H1 (cell line): ENCODE measurements at regions of chr19 and their contacts with region 1.

Region 1: DNA sequence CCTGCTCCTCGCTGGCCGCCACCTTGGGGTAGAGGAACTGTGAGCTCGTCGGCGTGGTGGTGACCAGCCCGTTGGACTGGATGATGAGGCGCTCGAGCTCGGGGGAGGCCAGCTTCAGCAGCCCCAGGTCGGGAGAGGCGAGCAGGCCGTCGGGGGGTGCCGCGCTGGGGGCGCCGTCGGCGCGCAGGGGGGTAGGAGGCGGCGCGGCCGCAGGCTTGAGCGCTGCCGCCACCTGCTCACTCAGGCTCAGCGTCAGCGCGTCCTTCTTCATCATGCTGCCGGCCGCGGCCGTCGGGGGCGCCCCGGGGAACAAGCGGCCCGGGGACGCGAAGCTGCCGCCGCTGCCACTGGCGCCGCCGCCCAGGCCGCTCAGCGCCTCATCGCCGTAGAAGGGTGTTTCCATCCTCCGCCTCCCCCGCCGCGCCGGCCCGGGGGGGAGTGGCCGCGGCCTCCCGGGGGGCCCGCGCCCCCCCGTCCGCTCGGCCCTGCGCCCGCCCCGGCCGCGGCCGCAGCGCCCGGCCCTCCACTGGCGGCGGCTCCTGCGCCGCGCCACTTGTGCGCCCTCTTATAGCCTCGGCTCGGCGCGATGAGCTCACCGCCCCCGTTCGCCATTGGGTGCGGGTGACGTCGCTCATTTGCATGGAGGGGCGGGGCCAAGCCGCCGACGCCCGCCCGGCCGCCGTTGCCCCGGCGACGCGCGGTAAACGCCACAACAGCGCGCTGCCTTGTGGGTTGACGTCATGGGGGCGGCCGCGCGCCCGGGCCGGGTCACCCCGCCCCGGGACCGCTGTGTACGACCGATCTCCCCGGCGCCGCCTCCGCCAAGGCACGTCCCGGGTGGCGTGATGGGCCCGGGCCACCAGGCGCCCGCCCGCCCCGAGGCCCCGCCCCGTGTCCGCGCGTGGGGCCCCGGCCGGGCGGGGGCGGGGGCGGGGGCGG is at the start of gene JUND:
- DNase-seq: peak; percentile 90 to 97
- H3K4me3 ChIP-seq: peak within 1 kb of the TSS; percentile 88 to 99 (median 92)
- H3K27ac ChIP-seq: peak within 1 kb of the TSS; percentile 95
- H3K4me1 ChIP-seq: peaks cover 4 to 14% (median 8%) of the 10 kb centered on the region in 4 experiments; a peak in 5 of 7 replicates
- H3K27me3 ChIP-seq: no peaks in the 10 kb centered on the region; a peak in 1 of 7 replicates
- CTCF ChIP-seq: no peak
- EP300 ChIP-seq: peak; percentile 80 to 96
- POLR2A ChIP-seq: peak in 1 of 2 experiments; percentile 99; a peak in 2 of 3 replicates
- RAD21 ChIP-seq: 0 out of 4 replicates have a peak, but pooled peaks of 1 of the 2 experiments have one; percentile 0
- total RNA-seq, gene JUND: 77.5 and 95.8 TPM in 2 replicates

Region 2: DNA sequence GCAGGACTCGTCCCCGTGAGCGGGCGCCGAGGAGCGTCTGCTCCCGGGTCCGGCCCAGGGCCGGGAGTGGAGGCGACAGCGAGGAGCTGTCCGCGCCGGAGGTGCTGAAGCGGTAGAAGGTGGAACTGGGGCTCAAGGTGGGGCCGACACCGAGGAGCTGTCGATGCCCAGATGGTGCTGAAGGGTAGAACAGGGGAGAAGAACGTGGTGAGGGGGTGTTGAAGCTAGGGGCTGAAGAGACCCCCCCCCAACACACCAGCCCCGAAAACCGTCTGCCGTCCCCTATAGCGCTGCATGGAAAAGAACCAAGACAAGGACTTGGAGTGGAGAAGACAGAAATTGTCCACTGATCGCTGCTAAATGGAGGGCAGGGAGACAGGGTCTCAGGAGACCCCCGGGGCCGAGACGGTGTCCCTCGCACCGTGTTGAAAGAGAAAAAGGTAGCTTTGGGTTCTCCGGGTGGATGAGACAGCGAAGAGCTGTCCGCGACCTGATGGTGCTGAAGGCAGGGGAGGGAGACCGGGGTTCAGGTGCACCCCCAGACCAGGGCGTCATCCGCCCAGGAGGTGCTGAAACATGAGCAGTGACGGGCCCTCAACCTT is 48.0 kb before region 1 on chr19:
- CTCF ChIA-PET with region 1: interaction called, 11 read pairs
- POLR2A ChIA-PET with region 1: interaction called, 43 read pairs
- DNase-seq: peak in 1 of 2 experiments; percentile 95
- H3K4me3 ChIP-seq: peak overlapping the region; percentile 11 to 54 (median 32); a peak in 7 of 8 replicates
- H3K27ac ChIP-seq: no peak overlapping the region
- H3K4me1 ChIP-seq: peaks cover 6 to 20% (median 14%) of the 10 kb centered on the region in 4 experiments
- H3K27me3 ChIP-seq: no peaks in the 10 kb centered on the region
- CTCF ChIP-seq: no peak
- EP300 ChIP-seq: peak in 1 of 2 experiments; percentile 18; a peak in 1 of 3 replicates
- POLR2A ChIP-seq: no peak
- RAD21 ChIP-seq: no peak

Region 3: GRCh38 chr19:18259893-18260292 is 21.5 kb before region 1 on chr19:
- CTCF ChIA-PET with region 1: interaction called, 172 read pairs
- POLR2A ChIA-PET with region 1: interaction called, 62 read pairs
- DNase-seq: no peak
- H3K4me3 ChIP-seq: no peak overlapping the region
- H3K27ac ChIP-seq: no peak overlapping the region
- H3K4me1 ChIP-seq: peaks cover under 1 to 7% (median 5%) of the 10 kb centered on the region in 4 experiments
- H3K27me3 ChIP-seq: peaks cover 0 to 10% (median 0%) of the 10 kb centered on the region in 4 experiments; a peak in 3 of 7 replicates
- CTCF ChIP-seq: no peak
- EP300 ChIP-seq: no peak
- POLR2A ChIP-seq: no peak
- RAD21 ChIP-seq: no peak

Region 4: DNA sequence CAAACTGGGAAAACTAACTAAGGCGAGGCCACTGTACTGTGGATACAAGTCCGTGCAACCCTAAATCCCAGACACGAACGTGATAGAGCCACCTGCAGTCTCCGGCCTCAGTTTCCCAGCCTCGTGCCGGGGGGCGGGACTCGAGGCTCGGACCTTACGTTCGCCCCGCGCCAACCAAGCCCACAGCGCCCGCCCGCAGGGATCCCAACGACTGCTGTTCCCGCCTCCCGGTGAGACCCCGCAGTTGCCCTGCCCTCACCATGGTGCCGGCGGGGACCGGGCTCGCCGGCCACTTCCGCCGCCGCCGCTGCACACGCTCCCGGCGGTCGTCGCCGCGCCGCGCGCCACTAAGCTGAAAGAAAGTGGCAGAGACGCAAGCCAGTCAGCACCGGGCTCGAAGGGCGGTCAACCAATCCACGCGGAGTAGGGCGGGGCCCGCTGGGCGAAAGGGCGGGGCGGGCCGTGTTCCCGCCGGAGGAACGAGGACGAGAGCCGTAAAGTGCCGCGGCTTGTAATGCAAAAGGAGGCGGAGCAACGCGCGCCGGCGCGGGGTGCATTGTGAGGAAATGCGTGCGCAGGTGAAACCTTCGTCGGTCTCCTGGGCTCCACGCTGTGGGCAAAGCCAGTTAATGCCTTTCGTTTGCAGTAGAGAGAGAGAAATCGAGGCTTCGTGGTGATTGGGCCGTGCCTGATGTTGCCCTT is 41.6 kb after region 1 on chr19 and contains the start of gene LSM4:
- CTCF ChIA-PET with region 1: interaction called, 242 read pairs
- POLR2A ChIA-PET with region 1: interaction called, 224 read pairs
- DNase-seq: peak; percentile 95 to 99
- H3K4me3 ChIP-seq: peak within 1 kb of the TSS; percentile 70 to 82 (median 78)
- H3K27ac ChIP-seq: peak within 1 kb of the TSS; percentile 92
- H3K4me1 ChIP-seq: peaks cover 6 to 9% (median 7%) of the 10 kb centered on the region in 4 experiments
- H3K27me3 ChIP-seq: no peaks in the 10 kb centered on the region
- CTCF ChIP-seq: peak; percentile 33 to 45 (median 39)
- EP300 ChIP-seq: peak in 1 of 2 experiments; percentile 74; a peak in 1 of 3 replicates
- POLR2A ChIP-seq: peak; percentile 79 to 84
- RAD21 ChIP-seq: peak; percentile 47 to 49
- total RNA-seq, gene LSM4: 319 and 344 TPM in 2 replicates

Region 5: DNA sequence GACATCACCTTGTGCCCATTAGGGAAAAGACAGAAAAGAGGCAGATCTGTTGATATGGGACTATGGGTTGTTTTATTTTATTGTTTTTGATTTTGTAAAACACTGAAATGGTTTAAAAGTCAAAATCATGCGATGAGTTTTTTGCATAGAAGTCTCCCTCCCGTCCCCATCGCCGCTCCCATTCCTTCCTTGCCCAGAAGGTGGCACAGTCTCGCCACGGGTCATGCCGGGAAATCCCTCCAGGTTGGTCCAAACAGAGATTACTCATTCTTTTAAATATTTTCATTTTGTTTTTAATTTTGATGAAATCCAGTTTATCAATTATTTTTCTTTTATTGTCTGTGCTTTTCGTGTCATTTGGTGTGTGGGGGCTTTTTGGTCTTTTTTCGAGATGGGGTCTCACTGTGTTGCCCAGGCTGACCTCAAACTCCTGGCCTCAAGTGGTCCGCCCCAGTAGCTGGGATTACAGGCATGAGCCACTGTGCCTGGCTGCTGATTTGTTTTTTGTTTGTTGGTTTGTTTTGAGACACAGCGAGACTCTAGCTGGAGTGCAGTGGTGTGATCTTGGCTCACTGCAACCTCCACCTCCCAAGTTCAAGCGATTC is 68.3 kb after region 1 on chr19:
- CTCF ChIA-PET with region 1: interaction called, 14 read pairs
- POLR2A ChIA-PET with region 1: interaction called, 224 read pairs
- DNase-seq: peak in 1 of 2 experiments; percentile 75
- H3K4me3 ChIP-seq: no peak overlapping the region
- H3K27ac ChIP-seq: no peak overlapping the region
- H3K4me1 ChIP-seq: peaks cover 0 to 3% (median 2%) of the 10 kb centered on the region in 4 experiments; a peak in 4 of 7 replicates
- H3K27me3 ChIP-seq: no peaks in the 10 kb centered on the region
- CTCF ChIP-seq: peak; percentile 76 to 87 (median 84)
- EP300 ChIP-seq: no peak
- POLR2A ChIP-seq: no peak
- RAD21 ChIP-seq: peak; percentile 89 to 91

Region 6: DNA sequence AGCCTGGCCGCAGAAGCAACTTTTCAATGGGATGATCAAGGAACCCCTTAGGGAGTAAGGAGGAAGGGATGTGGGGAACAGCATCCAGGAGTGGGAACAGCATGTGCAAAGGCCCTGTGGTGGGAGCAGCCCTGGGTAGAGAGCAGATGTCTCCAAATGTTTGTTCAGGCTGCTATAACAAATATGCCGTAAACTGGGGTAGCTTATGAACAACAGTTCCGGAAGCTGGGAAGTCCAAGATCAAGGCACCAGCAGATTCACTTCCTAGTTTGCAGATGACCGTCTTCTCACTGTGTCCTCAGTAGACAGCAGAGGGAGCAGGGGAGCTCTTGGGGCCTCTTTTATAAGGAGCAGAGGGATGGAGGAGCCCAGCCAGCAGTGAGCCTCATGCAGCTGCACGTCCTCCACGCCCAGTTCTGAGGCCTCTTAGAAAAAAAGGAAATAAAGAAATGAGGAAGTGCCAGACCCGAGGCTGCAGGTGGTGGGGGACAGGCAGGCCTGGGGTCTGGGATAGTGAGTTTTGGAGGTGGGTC is 120.3 kb after region 1 on chr19:
- CTCF ChIA-PET with region 1: interaction called, 9 read pairs
- POLR2A ChIA-PET with region 1: interaction called, 12 read pairs
- DNase-seq: no peak
- H3K4me3 ChIP-seq: no peak overlapping the region
- H3K27ac ChIP-seq: no peak overlapping the region
- H3K4me1 ChIP-seq: peaks cover 0 to 8% (median 3%) of the 10 kb centered on the region in 4 experiments; a peak in 5 of 7 replicates
- H3K27me3 ChIP-seq: peaks cover 0 to 3% (median under 1%) of the 10 kb centered on the region in 4 experiments; a peak in 3 of 7 replicates
- CTCF ChIP-seq: peak; percentile 41 to 62 (median 48)
- EP300 ChIP-seq: no peak
- POLR2A ChIP-seq: no peak
- RAD21 ChIP-seq: peak; percentile 34 to 45; a peak in 3 of 4 replicates